Activated CD8-positive, alpha-beta T cell treated with anti-CD3 and anti-CD28 coated beads for 36 hours (primary cell): ENCODE measurements at regions of chr3 and their contacts with region 1.

Region 1: DNA sequence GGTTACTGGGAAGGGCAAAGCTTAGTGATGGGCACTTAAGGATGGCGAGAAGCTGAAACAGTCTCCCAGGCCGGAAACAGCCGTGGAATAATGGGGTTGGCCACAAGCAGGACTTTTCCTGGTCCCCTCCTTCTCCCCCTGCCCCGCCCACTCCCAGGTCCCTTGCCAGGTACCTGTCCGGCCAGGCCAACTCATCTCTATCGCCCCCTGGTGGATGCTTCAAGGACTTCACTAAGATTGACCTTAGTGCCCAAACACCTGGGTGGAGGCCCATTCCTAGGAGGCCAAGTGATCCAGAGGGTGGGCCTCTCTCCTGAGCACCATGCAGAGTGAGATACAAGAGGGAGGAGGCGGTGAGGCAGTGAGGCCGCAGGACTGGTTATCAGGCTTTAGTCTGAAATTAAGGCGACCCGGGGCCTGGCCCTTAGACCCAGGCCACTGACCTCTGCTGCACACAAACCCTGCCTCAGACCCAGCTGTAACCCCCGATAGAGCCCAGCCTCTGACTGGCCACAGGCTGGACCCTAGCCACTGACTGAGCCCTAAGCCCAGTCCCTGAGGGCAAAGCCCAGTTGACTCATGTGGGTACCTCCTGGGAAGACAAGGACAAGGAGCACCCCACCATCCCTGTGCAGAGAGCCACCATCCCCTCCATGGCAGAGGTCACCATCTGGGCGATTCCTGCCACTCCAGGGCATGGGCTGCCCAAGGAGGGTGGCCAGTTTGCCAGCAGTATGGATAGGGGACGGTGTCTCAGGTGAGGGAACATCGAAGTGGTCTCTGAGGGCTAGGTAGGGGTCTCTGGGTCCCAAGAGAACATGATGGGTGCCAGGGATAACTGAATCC is 37.6 kb downstream of the VIPR1 start:
- DNase-seq: peak; percentile 77
- ATAC-seq: peak; percentile 79
- H3K4me3 Mint-ChIP-seq: no peak overlapping the region
- H3K27ac Mint-ChIP-seq: no peak overlapping the region
- H3K4me1 Mint-ChIP-seq: no peaks in the 10 kb centered on the region
- H3K27me3 Mint-ChIP-seq: no peaks in the 10 kb centered on the region
- CTCF ChIP-seq: peak; percentile 88

Region 2: DNA sequence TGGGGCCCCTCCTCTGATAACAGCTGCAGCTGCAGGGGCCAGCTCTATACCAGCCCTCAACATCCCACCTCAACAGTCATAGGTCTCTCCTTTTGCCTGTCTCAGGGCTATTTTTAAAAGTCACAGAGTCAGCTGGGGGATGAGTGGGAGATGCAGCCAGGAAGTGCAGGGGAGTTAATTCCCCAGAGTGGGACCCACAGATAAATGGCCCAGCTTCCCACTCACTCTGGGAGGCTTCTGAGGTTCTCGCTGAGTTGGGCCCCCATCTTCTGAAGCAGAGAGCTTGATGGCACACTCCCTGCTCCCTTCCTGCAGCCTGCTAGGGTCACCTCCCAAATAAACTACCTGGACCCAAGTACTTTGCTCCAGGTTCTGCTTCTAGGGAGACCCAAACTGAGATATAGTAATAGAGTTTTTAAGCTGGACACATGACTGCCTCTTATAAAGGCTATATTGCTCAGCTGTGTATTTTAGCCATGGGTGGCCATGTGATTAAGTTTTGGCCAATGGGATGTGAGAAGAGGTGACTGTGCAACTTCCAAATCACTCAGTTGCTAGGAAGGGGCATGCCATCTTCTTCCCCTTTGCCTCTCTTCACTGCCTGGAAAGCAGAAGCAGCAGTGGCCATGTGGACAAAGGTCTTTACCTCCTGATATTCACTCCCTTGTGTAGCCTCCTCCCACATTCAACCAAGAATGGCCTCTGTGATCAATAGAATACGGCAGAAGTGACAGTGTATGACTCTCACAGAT is 53.1 kb before region 1 on chr3:
- CTCF ChIA-PET with region 1: no interaction called
- POLR2A ChIA-PET with region 1: no interaction called
- intact Hi-C with region 1: no loop called
- DNase-seq: no peak
- ATAC-seq: no peak
- H3K4me3 Mint-ChIP-seq: no peak overlapping the region
- H3K27ac Mint-ChIP-seq: no peak overlapping the region
- H3K4me1 Mint-ChIP-seq: no peaks in the 10 kb centered on the region
- H3K27me3 Mint-ChIP-seq: no peaks in the 10 kb centered on the region
- CTCF ChIP-seq: no peak

Region 3: DNA sequence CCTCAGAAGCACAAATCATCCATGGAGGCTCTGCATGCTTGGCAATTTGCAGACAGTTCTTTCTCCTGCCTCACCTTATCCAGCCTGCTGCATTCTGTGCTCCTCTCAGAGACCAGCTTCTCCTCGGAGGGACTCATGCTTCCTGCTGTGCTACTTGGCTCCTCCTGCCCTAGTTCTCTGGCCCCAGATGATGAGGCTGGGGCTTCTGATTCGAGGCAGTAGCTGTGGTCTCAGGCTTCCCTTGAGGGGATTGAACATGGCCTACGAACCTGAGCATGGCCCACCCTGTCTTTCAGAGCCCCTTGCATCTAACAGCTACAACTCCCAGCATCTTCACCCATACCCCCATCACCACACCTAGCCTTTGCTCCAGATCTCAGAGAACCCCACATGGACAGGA is 31.0 kb before region 1 on chr3:
- CTCF ChIA-PET with region 1: interaction called, 111 read pairs
- POLR2A ChIA-PET with region 1: no interaction called
- intact Hi-C with region 1: loop called (anchors 5 kb)
- DNase-seq: no peak
- ATAC-seq: no peak
- H3K4me3 Mint-ChIP-seq: no peak overlapping the region
- H3K27ac Mint-ChIP-seq: no peak overlapping the region
- H3K4me1 Mint-ChIP-seq: peaks cover 31% of the 10 kb centered on the region
- H3K27me3 Mint-ChIP-seq: no peaks in the 10 kb centered on the region
- CTCF ChIP-seq: no peak

Region 4: DNA sequence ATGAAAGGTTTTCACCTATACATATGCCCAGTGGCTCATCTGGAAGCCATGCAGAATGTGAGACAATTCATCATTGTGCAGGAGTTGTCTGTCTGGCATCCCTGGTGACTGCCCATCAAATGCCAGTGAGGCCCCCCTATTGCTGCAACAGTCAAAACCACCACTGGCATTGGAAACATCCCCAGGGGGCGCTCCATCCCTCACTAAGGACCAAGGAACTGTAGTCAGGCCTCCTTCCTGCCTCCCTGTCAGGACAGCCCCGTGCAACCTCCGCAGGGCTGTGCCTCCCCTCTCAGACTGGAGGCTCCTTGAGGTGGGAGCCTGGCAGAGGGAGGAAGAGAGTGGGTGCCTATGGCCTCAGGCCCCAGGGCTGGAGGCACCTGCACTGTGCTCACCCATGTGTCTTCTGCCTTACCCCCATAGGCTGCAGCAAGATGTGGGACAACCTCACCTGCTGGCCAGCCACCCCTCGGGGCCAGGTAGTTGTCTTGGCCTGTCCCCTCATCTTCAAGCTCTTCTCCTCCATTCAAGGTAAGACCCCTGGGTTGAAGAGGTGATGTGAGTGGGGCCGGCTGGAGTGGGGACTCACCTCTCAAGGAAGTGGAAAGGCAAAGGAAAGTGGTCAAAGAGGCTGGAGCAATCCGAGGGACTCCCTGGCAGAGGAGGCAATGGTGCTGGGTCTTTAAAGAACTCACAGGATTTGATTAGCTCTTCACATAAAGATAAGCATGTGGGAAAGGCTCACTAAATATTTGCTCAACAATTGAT is 21.1 kb before region 1 on chr3:
- CTCF ChIA-PET with region 1: interaction called, 11 read pairs
- POLR2A ChIA-PET with region 1: interaction called, 3 read pairs
- intact Hi-C with region 1: no loop called
- DNase-seq: peak; percentile 74
- ATAC-seq: peak; percentile 19
- H3K4me3 Mint-ChIP-seq: no peak overlapping the region
- H3K27ac Mint-ChIP-seq: peak overlapping the region; percentile 78
- H3K4me1 Mint-ChIP-seq: peaks cover 16% of the 10 kb centered on the region
- H3K27me3 Mint-ChIP-seq: no peaks in the 10 kb centered on the region
- CTCF ChIP-seq: peak; percentile 48

Region 5: DNA sequence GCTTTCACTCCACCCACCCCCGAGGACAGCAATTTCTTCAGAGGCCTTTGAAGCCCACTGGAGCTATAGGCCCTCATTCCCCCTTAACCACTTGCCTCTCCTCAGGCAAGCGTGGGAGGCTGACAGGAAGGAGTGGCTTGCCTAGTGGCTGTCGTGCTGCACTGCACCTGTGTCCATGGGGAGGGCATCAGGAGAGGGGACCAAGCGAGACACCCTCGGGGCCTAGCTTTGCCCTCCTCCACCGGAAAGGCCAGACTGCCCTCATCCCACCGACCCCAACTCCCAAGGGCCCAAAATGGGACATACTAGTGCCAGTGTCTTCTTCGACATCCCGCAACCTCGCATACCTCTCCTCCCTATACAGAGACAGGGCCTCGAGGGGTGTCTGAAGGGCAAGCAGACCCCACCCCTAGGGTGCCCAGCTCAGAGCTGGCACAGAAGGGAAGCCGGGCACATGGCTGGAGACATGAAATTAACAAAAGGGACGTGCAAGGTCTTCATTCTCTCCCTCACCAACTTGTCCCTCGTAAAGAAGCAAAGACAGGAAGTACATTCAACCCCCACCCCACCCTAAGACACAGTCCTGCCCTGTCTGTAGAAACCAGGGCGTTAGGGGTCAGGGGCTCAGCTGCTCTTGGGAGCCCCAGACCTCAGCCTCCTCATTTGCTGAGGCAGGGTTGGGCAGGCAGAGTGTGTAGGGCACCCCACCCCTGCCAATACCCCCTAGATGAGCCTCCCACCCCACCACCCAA is 13.3 kb before region 1 on chr3:
- CTCF ChIA-PET with region 1: interaction called, 22 read pairs
- POLR2A ChIA-PET with region 1: interaction called, 4 read pairs
- intact Hi-C with region 1: no loop called
- DNase-seq: peak; percentile 82
- ATAC-seq: peak; percentile 96
- H3K4me3 Mint-ChIP-seq: peak overlapping the region; percentile 21
- H3K27ac Mint-ChIP-seq: peak overlapping the region; percentile 91
- H3K4me1 Mint-ChIP-seq: peaks cover 57% of the 10 kb centered on the region
- H3K27me3 Mint-ChIP-seq: no peaks in the 10 kb centered on the region
- CTCF ChIP-seq: peak; percentile 17

Region 6: GRCh38 chr3:43094851-43095250 is 554.8 kb after region 1 on chr3:
- CTCF ChIA-PET with region 1: no interaction called
- POLR2A ChIA-PET with region 1: no interaction called
- intact Hi-C with region 1: no loop called
- DNase-seq: no peak
- ATAC-seq: no peak
- H3K4me3 Mint-ChIP-seq: no peak overlapping the region
- H3K27ac Mint-ChIP-seq: no peak overlapping the region
- H3K4me1 Mint-ChIP-seq: peaks cover 2% of the 10 kb centered on the region
- H3K27me3 Mint-ChIP-seq: no peaks in the 10 kb centered on the region
- CTCF ChIP-seq: no peak